RWPE1 (cell line): ENCODE measurements at regions of chr20 and their contacts with region 1.

Region 1: GRCh38 chr20:46562373-46563169 is 12.1 kb upstream of the OCSTAMP start:
- DNase-seq: peak; percentile 93
- H3K27ac ChIP-seq: no peak overlapping the region
- CTCF ChIP-seq: peak; percentile 99

Region 2: GRCh38 chr20:46423882-46424482 is 138.6 kb before region 1 on chr20:
- CTCF ChIA-PET with region 1: no interaction called
- POLR2A ChIA-PET with region 1: no interaction called
- DNase-seq: peak; percentile 74
- H3K27ac ChIP-seq: no peak overlapping the region
- CTCF ChIP-seq: no peak

Region 3: DNA sequence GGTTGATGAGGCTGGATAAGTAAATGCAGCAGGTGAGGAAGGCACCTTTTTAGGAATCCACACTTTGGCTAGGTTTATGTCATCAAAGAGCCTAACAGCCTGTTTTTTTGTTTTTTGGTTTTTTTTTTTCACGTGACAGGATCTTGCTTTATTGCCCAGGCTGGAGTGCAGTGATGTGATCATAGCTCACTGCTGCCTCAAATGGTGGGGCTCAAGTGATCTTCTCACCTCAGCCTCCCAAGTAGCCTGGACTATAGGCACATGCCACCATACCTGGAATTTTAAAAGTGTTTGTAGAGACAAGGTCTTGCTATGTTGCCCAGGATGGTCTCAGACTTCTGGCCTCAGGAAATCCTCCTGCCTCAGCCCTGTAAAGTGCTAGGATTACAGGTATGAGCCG is 85.3 kb before region 1 on chr20:
- CTCF ChIA-PET with region 1: no interaction called
- POLR2A ChIA-PET with region 1: no interaction called
- DNase-seq: no peak
- H3K27ac ChIP-seq: no peak overlapping the region
- CTCF ChIP-seq: no peak; the same call in 1 of the 2 replicates

Region 4: GRCh38 chr20:46665602-46666001 is 103.0 kb after region 1 on chr20:
- CTCF ChIA-PET with region 1: no interaction called
- POLR2A ChIA-PET with region 1: no interaction called
- DNase-seq: no peak
- H3K27ac ChIP-seq: no peak overlapping the region
- CTCF ChIP-seq: no peak

Region 5: DNA sequence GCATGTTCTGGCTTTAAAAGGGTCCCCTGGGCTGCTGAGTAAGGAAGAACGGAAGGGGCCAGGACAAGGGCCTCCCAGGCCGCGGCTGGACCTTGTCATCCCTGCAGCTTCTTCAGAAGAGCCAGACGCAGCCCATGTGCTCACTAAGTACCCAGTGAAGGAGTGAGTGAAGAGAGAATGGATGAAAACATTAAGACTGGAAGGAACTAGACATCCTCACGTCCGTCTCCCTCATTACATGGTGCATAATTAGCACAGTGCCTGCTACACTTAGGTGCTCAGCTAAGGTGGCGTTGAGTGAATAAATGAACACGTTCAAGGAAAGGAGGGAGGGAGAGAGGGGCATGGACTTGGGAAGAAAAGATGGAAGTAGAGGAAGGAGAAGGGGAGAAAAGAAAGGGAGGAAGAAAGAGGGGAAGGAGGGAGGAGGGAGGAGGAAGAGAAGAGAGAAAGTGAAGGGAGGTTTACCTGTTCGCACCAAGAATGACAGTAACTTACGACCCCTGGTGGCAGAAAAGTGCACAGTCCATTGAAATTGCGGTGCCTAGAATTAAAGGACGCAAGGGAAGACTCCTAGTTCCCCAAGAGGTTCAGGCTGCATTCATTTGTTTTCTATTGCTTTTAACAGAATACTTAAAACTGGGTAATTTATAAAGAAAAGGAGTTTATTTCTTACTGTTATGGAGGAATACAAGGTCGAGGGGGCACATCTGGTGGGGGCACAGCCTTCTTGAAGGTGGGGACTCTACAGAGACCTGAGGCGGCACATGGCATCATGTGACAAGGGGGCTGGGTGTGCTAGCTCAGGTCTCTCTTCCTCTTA is 118.7 kb after region 1 on chr20:
- CTCF ChIA-PET with region 1: interaction called, 13 read pairs
- POLR2A ChIA-PET with region 1: no interaction called
- DNase-seq: peak; percentile 78
- H3K27ac ChIP-seq: no peak overlapping the region
- CTCF ChIP-seq: peak; percentile 91

Region 6: DNA sequence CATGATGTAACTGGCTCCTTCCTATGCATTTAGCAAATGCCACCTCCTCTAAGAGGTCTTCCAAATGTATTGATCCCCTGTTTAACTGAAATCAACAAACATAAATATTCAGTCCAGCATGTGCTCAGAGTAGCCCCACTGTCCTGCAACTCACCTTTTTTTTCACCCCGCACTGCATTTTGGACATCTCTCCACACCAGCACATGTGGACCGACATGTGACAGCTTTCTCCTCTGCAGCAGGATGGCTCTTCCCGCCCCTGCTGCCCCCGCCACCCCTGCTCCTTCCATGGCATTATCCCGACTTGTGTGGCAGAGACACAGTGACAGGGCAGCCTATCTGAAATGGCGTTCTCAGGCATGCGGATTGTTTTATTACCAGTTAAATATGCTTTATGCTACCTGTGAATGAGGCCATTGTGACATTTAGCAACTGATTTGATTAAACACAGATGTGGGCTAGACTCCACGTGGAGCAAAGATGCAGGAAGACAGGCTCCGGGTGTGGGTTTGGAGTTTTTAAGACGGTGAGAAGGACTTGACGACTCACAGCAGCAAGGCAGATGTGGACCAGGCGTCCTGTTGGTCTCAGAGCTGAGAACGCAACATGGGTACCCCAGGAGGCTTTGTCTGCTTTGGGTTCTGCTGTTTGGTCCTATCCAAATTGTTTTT is 493.3 kb after region 1 on chr20:
- CTCF ChIA-PET with region 1: interaction called, 10 read pairs
- POLR2A ChIA-PET with region 1: no interaction called
- DNase-seq: no peak
- H3K27ac ChIP-seq: no peak overlapping the region
- CTCF ChIP-seq: no peak